ENCODE measurements at regions of chr14 and their contacts with region 1.

Region 1: GRCh38 chr14:67514650-67515385 is 18.3 kb upstream of the PLEKHH1 start:
- DNase-seq: peak; percentile 77
- H3K4me3 ChIP-seq: peak overlapping the region; percentile 83 to 99 (median 94)
- H3K27ac ChIP-seq: peak overlapping the region; percentile 70 to 78 (median 76)
- H3K4me1 ChIP-seq: peaks cover 0 to 24% (median 18%) of the 10 kb centered on the region in 4 donors
- H3K27me3 ChIP-seq: no peaks in the 10 kb centered on the region
- CTCF ChIP-seq: no peak
- EP300 ChIP-seq: no peak
- POLR2A ChIP-seq: no peak

Region 2: GRCh38 chr14:67311905-67312304 is 202.9 kb before region 1 on chr14:
- intact Hi-C with region 1: no loop called
- DNase-seq: no peak
- H3K4me3 ChIP-seq: no peak overlapping the region
- H3K27ac ChIP-seq: no peak overlapping the region
- H3K4me1 ChIP-seq: no peaks in the 10 kb centered on the region
- H3K27me3 ChIP-seq: no peaks in the 10 kb centered on the region
- CTCF ChIP-seq: no peak
- EP300 ChIP-seq: no peak
- POLR2A ChIP-seq: no peak

Region 3: DNA sequence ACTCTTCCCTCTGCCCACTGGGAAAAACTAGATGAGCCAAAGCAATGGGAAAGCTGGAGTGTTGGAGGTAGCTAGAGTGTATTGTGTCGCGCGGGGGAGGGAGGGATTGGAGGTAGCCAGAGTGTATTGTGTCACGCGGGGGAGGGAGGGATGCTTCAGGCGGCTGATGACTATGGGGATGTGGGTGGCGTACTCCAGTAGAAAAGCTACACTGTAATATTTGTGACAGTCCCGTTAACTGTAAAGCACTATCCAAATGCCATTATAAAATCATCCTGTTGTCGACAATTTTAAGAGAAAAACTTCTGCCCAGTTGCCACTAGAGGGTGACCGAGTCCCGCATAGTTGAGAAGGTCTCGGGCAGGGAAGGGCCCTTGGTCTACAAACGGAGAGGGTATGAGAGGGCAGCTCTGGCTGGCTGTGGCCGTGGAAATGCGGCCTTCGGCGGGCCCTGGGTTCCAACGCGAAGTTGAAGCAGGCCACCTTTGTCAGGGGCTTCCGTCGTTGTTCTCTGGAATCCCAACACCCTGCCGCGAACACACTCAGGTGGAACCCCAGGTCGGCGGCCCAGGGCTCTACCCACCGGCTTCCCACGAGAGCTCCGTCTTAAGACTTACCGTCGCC is 87.7 kb before region 1 on chr14:
- intact Hi-C with region 1: loop called (anchors 5 kb)
- DNase-seq: peak; percentile 86
- H3K4me3 ChIP-seq: no peak overlapping the region
- H3K27ac ChIP-seq: no peak overlapping the region
- H3K4me1 ChIP-seq: peaks cover 0 to 25% (median 8%) of the 10 kb centered on the region in 4 donors
- H3K27me3 ChIP-seq: peaks cover 0 to 4% (median 0%) of the 10 kb centered on the region in 3 donors
- CTCF ChIP-seq: peak; percentile 79 to 85 (median 83)
- EP300 ChIP-seq: no peak
- POLR2A ChIP-seq: no peak

Region 4: GRCh38 chr14:67440541-67440940 is 74.3 kb before region 1 on chr14:
- intact Hi-C with region 1: loop called (anchors 5 kb)
- DNase-seq: no peak
- H3K4me3 ChIP-seq: no peak overlapping the region
- H3K27ac ChIP-seq: no peak overlapping the region
- H3K4me1 ChIP-seq: peaks cover 0 to 27% (median 16%) of the 10 kb centered on the region in 4 donors
- H3K27me3 ChIP-seq: no peaks in the 10 kb centered on the region
- CTCF ChIP-seq: no peak
- EP300 ChIP-seq: no peak
- POLR2A ChIP-seq: no peak

Measured in sigmoid colon (tissue), 7 donors.